ENCODE measurements at regions of chr20 and their contacts with region 1.

Region 1: GRCh38 chr20:31723319-31724078 is 831 bp upstream of the BCL2L1 start:
- DNase-seq: peak; percentile 99
- ATAC-seq: peak; percentile 98

Region 2: GRCh38 chr20:31560094-31560899 is 163.2 kb before region 1 on chr20:
- intact Hi-C with region 1: loop called in 1 of 2 experiments (anchors 10 kb)
- DNase-seq: peak; percentile 80
- ATAC-seq: peak; percentile 34 to 38

Region 3: GRCh38 chr20:31661625-31662371 is 61.7 kb before region 1 on chr20:
- intact Hi-C with region 1: loop called (anchors 1 to 5 kb)
- DNase-seq: peak; percentile 87
- ATAC-seq: peak; percentile 88 to 90

Region 4: GRCh38 chr20:31811796-31812728 is 88.6 kb after region 1 on chr20:
- intact Hi-C with region 1: loop called in 1 of 2 experiments (anchors 10 kb)
- DNase-seq: no peak
- ATAC-seq: peak; percentile 35 to 55

Region 5: DNA sequence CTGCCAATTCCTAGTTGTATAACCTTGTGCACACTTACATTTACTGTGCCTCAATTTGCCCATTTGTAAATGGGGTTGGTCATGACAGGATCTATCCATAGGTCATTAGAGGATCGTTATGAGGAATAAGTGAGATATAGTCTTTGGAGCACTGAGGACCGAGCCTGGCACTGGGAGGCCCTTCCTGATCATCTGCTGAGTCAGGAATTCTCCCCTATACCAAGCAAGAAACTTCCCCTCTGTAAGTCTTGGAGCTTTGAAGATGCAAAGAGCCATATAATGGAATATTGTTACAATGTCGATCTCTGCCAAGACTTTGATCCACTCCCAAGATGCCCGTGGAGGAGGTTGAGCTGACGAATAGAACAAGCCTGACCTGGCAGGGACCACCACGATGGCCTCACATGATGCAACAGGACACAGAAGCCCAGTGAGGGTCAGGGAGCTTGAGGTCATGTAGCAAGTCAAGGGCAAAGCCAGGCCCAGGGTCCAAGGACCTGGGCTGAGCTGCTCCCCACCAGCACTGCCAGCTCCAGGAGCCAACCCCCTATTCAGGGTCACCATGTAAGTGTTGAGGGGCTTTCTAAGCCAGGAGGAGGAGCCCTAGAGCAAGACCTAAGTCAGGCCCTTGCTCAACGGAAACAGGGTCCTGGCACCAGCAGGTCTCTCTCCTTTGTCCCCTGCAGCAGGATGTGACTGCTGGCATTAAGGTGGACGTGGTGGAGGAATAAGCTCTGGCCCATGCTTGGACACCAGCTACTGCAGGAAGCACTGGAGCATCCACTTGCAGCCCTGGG is 211.7 kb after region 1 on chr20:
- intact Hi-C with region 1: no loop called
- DNase-seq: no peak
- ATAC-seq: no peak

Region 6: GRCh38 chr20:31956556-31957526 is 233.3 kb after region 1 on chr20:
- intact Hi-C with region 1: no loop called
- DNase-seq: no peak
- ATAC-seq: no peak

Measured in left cardiac atrium (tissue), 4 donors.